MCF 10A (cell line): ENCODE measurements at regions of chr11 and their contacts with region 1.

Region 1: DNA sequence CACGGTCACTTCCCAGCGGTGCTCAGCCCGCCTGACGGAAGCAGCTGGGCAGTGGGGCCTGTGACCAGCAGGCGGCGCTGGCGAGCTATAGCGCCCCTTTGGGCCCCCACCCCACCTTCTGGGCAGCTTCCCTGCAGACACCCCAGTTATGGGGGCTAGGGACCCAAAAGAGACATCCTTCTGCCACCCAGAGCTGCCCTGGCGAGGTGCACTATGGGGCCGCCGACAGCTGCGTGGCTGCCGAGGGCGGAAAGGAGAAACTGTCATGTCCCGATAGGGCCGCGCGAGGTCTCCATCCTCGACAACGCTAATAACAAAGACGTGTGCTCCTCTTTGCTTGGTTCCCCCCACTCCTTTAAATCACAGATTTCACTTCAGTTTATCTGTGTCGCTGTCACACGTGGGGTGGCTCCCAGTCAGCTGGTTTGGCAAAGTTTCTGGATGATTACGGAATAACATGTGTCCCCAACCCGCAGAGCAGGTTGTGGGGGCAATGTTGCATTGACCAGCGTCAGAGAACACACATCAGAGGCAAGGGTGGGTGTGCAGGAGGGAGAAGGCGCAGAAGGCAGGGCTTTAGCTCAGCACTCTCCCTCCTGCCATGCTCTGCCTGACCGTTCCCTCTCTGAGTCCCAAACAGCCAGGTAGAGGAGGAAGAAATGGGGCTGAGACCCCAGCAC is 674 bp upstream of the MYO7A start:
- DNase-seq: peak; percentile 43
- H3K4me3 Mint-ChIP-seq: peak overlapping the region; percentile 68
- H3K27ac Mint-ChIP-seq: no peak overlapping the region
- H3K4me1 Mint-ChIP-seq: no peaks in the 10 kb centered on the region
- H3K27me3 Mint-ChIP-seq: peaks cover 11% of the 10 kb centered on the region
- CTCF ChIP-seq: peak; percentile 99

Region 2: DNA sequence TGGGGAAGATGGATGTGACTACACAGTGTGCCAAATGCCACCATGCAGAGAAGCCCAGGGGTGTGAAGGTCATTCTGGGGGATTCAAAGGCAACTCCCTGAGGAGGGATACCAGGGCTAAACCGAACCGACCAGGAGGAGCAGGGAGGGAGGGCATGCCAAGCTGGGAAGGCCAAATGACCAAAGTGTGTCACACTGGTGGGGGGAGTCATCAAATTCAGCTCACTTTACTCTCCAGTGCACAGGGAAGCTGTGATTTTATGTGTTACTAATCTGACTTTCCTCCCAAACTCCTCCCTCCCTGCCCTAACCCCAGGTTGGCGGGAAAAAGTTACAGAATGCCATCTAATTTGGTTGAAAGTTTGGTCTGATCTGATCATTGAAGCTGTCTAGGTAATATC is 373.9 kb before region 1 on chr11:
- CTCF ChIA-PET with region 1: no interaction called
- POLR2A ChIA-PET with region 1: no interaction called
- intact Hi-C with region 1: no loop called
- DNase-seq: no peak
- H3K4me3 Mint-ChIP-seq: no peak overlapping the region
- H3K27ac Mint-ChIP-seq: peak overlapping the region; percentile 13
- H3K4me1 Mint-ChIP-seq: peaks cover 19% of the 10 kb centered on the region
- H3K27me3 Mint-ChIP-seq: no peaks in the 10 kb centered on the region
- CTCF ChIP-seq: no peak

Region 3: GRCh38 chr11:77113382-77114088 is 13.8 kb before region 1 on chr11:
- CTCF ChIA-PET with region 1: interaction called, 52 read pairs
- POLR2A ChIA-PET with region 1: no interaction called
- intact Hi-C with region 1: no loop called
- DNase-seq: peak; percentile 60
- H3K4me3 Mint-ChIP-seq: no peak overlapping the region
- H3K27ac Mint-ChIP-seq: no peak overlapping the region
- H3K4me1 Mint-ChIP-seq: no peaks in the 10 kb centered on the region
- H3K27me3 Mint-ChIP-seq: no peaks in the 10 kb centered on the region
- CTCF ChIP-seq: peak; percentile 47

Region 4: DNA sequence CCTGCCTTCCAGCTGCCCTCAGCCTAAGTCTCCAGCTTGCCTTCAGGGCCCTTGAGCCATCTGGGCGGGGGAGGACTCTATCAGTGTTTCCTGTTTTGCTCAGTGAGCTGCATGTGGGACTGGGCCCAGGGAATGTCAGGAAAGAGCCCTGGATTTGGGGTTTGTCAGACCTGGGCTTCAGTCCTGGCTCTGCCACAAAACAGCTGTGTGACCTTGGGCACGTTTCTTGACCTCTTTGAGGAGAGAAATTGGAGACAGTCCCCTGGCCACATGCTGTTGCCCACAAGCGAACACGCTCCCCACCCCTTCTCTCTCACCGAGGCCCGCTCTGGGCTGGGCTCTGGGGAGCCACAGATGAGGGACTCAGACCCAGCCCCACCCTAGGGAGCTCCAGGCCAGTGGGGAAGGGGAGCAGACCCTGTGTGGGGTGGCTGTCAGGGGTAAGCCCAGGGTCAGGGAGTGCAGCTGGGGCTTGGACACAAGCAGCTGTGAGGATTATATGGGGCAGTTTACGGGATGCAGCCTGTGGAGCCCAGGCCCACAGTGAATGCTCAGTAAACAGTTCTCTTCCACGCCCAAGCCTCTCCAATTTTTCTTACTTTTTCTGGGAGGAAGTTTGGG is 13.0 kb after region 1 on chr11:
- CTCF ChIA-PET with region 1: interaction called, 34 read pairs
- POLR2A ChIA-PET with region 1: no interaction called
- intact Hi-C with region 1: no loop called
- DNase-seq: no peak
- H3K4me3 Mint-ChIP-seq: no peak overlapping the region
- H3K27ac Mint-ChIP-seq: no peak overlapping the region
- H3K4me1 Mint-ChIP-seq: no peaks in the 10 kb centered on the region
- H3K27me3 Mint-ChIP-seq: no peaks in the 10 kb centered on the region
- CTCF ChIP-seq: no peak

Region 5: DNA sequence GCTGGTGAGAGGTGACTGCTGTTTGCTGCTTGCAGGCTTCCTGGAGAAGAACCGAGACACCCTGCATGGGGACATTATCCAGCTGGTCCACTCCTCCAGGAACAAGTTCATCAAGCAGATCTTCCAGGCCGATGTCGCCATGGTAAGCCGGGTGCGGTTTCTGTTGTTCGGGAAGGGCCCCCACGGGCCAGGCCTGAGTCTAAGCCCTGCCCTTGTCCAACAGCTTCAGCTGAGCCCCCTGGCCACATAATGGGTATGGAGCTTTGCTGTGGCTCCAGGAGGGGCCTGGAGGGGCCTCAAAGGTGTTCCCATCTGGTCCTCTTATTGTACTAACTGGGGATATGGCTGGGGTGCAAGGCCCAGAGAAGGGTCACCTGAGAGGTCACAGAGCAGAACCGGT is 38.6 kb after region 1 on chr11:
- CTCF ChIA-PET with region 1: interaction called, 10 read pairs
- POLR2A ChIA-PET with region 1: no interaction called
- intact Hi-C with region 1: no loop called
- DNase-seq: no peak
- H3K4me3 Mint-ChIP-seq: no peak overlapping the region
- H3K27ac Mint-ChIP-seq: no peak overlapping the region
- H3K4me1 Mint-ChIP-seq: no peaks in the 10 kb centered on the region
- H3K27me3 Mint-ChIP-seq: peaks cover 6% of the 10 kb centered on the region
- CTCF ChIP-seq: no peak

Region 6: DNA sequence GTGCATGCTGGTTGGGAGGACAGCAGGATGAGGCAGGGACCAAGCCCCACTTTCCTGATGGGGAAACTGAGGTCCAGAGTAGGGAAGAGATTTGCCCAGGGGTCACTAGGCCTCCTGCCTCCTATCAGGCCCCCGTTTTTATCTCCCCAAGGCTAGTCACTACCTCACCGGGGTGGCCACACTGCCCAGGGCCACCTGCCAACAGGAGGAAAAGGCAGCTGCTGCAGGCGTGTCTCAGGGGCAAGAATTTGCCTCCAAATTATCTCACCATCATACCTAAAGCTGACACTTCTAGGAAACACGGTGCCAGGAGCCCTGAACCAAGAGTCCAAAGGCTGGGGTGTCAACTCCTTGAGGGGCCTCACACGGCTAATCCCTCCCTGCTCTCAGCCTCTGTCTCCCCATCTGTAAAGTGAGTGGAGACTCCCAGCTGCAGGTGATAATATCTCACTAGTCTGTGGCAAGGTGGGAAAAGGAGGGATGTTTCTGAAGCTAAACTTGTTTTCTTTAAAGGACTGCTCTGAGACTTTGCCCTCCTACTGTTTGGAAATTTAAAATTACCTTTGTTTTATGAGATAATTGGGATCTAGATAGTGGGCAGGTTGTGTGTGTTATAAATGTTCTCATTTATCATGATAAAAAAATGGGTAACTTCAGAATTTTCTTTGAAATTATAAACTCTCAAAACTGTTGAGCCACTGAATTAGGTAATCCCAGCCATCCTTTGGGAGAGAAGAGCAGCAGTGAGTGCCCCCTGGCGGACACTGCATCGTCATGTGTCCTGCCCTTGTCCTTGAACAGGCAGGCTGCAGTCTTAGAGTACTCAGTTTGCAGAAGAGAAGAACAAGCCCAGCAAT is 60.6 kb after region 1 on chr11:
- CTCF ChIA-PET with region 1: interaction called, 34 read pairs
- POLR2A ChIA-PET with region 1: no interaction called
- intact Hi-C with region 1: loop called (anchors 1 kb)
- DNase-seq: peak; percentile 83
- H3K4me3 Mint-ChIP-seq: no peak overlapping the region
- H3K27ac Mint-ChIP-seq: no peak overlapping the region
- H3K4me1 Mint-ChIP-seq: no peaks in the 10 kb centered on the region
- H3K27me3 Mint-ChIP-seq: peaks cover 12% of the 10 kb centered on the region
- CTCF ChIP-seq: peak; percentile 79

Region 7: GRCh38 chr11:77619576-77620198 is 492.3 kb after region 1 on chr11:
- CTCF ChIA-PET with region 1: interaction called, 6 read pairs
- POLR2A ChIA-PET with region 1: no interaction called
- intact Hi-C with region 1: loop called (anchors 5 kb)
- DNase-seq: peak; percentile 58
- H3K4me3 Mint-ChIP-seq: no peak overlapping the region
- H3K27ac Mint-ChIP-seq: no peak overlapping the region
- H3K4me1 Mint-ChIP-seq: no peaks in the 10 kb centered on the region
- H3K27me3 Mint-ChIP-seq: no peaks in the 10 kb centered on the region
- CTCF ChIP-seq: peak; percentile 62

Region 8: DNA sequence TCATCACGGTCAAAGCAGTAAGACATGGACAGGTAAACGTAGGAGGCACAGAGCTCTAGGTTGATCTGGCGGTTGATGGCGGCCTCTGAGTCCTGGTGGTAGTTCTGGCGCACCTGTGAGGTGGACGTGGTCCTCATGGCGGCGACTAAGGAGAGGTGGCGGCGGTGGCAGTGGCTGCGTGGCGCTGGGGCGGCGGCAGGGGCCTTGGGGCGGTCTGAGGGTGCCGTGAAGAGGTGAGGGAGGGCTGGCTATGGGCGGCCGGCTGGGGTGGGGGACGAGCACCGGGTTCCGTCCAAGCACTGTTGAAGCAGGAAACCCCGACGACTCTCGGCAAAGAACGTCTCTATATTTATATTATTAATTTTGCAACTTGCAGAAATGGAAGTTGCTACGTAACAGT is 607.5 kb after region 1 on chr11:
- CTCF ChIA-PET with region 1: no interaction called
- POLR2A ChIA-PET with region 1: no interaction called
- intact Hi-C with region 1: no loop called
- DNase-seq: no peak
- H3K4me3 Mint-ChIP-seq: no peak overlapping the region
- H3K27ac Mint-ChIP-seq: no peak overlapping the region
- H3K4me1 Mint-ChIP-seq: no peaks in the 10 kb centered on the region
- H3K27me3 Mint-ChIP-seq: no peaks in the 10 kb centered on the region
- CTCF ChIP-seq: no peak